CD8-positive, alpha-beta T cell (primary cell): ENCODE measurements at regions of chr5 and their contacts with region 1.

Region 1: GRCh38 chr5:79235634-79236363 is at the start of gene JMY:
- DNase-seq: peak; percentile 72 to 94 (median 85)
- ATAC-seq: peak; percentile 86
- H3K4me3 ChIP-seq: peak within 1 kb of the TSS; percentile 79 to 81
- H3K4me3 Mint-ChIP-seq: peak within 1 kb of the TSS; percentile 97
- H3K27ac ChIP-seq: peak within 1 kb of the TSS; percentile 91 to 98
- H3K27ac Mint-ChIP-seq: peak within 1 kb of the TSS; percentile 96
- H3K4me1 ChIP-seq: peaks cover 28% of the 10 kb centered on the region
- H3K4me1 Mint-ChIP-seq: peaks cover 34% of the 10 kb centered on the region
- H3K27me3 ChIP-seq: no peaks in the 10 kb centered on the region
- H3K27me3 Mint-ChIP-seq: no peaks in the 10 kb centered on the region
- CTCF ChIP-seq: no peak
- total RNA-seq, gene JMY: 104 TPM

Region 2: DNA sequence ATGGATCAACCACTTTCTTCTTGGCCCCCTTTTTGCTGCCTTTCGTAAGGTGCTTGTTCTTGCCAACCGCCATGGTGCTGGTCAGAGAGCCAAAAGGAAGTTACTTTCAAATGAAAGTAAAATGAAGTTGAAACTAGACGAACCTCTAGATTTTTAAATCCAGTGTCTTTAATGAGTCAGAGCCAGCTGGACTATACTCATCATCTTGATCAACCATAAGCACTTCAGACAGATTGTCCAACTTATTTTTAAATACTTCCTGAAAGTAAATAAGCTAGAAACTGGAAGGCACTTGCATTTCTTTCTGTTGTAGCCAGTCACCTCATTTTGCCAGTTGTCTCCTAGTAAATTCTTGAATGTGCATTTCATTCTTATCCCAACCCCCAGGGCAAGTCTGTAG is 49.0 kb after region 1 on chr5:
- CTCF ChIA-PET with region 1: no interaction called
- POLR2A ChIA-PET with region 1: no interaction called
- intact Hi-C with region 1: loop called in 1 of 2 experiments (anchors 5 kb)
- DNase-seq: no peak
- ATAC-seq: no peak
- H3K4me3 ChIP-seq: no peak overlapping the region
- H3K4me3 Mint-ChIP-seq: no peak overlapping the region
- H3K27ac ChIP-seq: no peak overlapping the region
- H3K27ac Mint-ChIP-seq: no peak overlapping the region
- H3K4me1 ChIP-seq: no peaks in the 10 kb centered on the region
- H3K4me1 Mint-ChIP-seq: peaks cover 26% of the 10 kb centered on the region
- H3K27me3 ChIP-seq: no peaks in the 10 kb centered on the region
- H3K27me3 Mint-ChIP-seq: no peaks in the 10 kb centered on the region
- CTCF ChIP-seq: no peak